Mucosa of descending colon (tissue), 3 donors: ENCODE measurements at regions of chr3 and their contacts with region 1.

Region 1: DNA sequence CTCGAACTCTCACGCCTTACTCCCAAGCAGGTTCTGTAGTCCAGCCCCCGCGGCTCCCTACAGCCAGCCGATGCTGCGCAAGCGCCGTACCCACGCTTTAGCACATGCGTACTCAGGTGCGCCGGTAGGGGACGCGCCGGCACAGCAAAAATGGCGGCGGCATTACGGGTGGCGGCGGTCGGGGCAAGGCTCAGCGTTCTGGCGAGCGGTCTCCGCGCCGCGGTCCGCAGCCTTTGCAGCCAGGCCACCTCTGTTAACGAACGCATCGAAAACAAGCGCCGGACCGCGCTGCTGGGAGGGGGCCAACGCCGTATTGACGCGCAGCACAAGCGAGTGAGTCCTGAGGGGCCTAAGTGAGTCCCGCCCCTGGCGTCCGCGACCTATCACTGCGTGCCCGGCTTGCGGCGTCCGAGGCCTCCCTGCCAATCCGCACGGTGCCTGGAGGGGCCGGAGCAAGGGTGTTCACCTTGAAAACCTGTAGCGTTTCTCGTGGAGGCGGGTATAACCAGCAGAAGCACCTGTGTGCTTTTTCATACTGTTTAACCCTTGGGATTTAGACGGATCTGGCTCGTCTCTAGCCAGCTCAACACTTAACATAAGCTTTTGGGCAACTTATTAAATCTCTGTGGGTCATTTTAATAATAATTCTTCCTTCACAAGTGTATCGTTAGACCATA is at the start of gene PCCB:
- DNase-seq: peak; percentile 95 to 97 (median 96)
- ATAC-seq: peak; percentile 99
- H3K4me3 ChIP-seq: peak within 1 kb of the TSS; percentile 39
- H3K4me1 ChIP-seq: peaks cover 9% of the 10 kb centered on the region
- CTCF ChIP-seq: peak; percentile 73
- total RNA-seq, gene PCCB: 35.8 to 54.8 (median 49.9) TPM

Region 2: GRCh38 chr3:136196401-136197158 is 53.8 kb before region 1 on chr3:
- intact Hi-C with region 1: loop called in 1 of 2 experiments (anchors 10 kb)
- DNase-seq: peak; percentile 99 to 100 (median 99)
- ATAC-seq: peak; percentile 82
- H3K4me3 ChIP-seq: peak overlapping the region; percentile 89
- H3K4me1 ChIP-seq: peaks cover 22% of the 10 kb centered on the region
- CTCF ChIP-seq: no peak

Region 3: DNA sequence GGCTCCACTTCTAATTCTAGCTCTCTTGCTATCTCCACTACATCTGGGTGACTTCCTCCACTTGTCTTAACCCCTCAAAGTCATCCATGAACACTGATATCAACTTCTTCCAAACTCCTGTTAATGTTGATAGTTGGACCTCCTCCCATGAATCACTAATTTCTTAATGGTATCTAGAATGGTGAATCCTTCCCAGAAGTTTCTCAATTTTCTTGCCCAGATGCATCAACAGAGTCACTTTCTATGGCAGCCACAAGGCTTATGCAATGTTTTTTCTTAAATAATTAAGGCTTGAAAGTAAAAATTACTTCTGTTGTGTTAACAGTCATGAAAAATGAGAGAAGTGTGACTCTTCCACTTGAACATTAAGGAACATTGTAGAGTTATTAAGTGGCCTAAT is 164.1 kb after region 1 on chr3:
- intact Hi-C with region 1: no loop called
- DNase-seq: no peak
- ATAC-seq: no peak
- H3K4me3 ChIP-seq: no peak overlapping the region
- H3K4me1 ChIP-seq: no peaks in the 10 kb centered on the region
- CTCF ChIP-seq: no peak